CD4-positive, alpha-beta memory T cell (primary cell): ENCODE measurements at regions of chr4 and their contacts with region 1.

Region 1: GRCh38 chr4:80365928-80366327 is 30.4 kb downstream of the CFAP299 start:
- DNase-seq: peak; percentile 48 to 69 (median 63)
- H3K4me3 ChIP-seq: no peak overlapping the region
- H3K4me3 Mint-ChIP-seq: no peak overlapping the region
- H3K27ac ChIP-seq: no peak overlapping the region
- H3K27ac Mint-ChIP-seq: peak overlapping the region in 1 of 7 donors; percentile 31
- H3K4me1 ChIP-seq: peaks cover 4% of the 10 kb centered on the region
- H3K4me1 Mint-ChIP-seq: peaks cover 6 to 8% (median 7%) of the 10 kb centered on the region in 4 donors
- H3K27me3 ChIP-seq: no peaks in the 10 kb centered on the region
- H3K27me3 Mint-ChIP-seq: peaks cover 0 to 2% of the 10 kb centered on the region in 2 donors

Region 2: GRCh38 chr4:78951862-78952472 is 1414.0 kb before region 1 on chr4:
- CTCF ChIA-PET with region 1: interaction called, 3 read pairs
- POLR2A ChIA-PET with region 1: no interaction called
- intact Hi-C with region 1: loop called (anchors 10 kb)
- DNase-seq: peak in 4 of 5 donors; percentile 41 to 45 (median 41)
- H3K4me3 ChIP-seq: no peak overlapping the region
- H3K4me3 Mint-ChIP-seq: no peak overlapping the region
- H3K27ac ChIP-seq: no peak overlapping the region
- H3K27ac Mint-ChIP-seq: no peak overlapping the region
- H3K4me1 ChIP-seq: no peaks in the 10 kb centered on the region
- H3K4me1 Mint-ChIP-seq: no peaks in the 10 kb centered on the region
- H3K27me3 ChIP-seq: no peaks in the 10 kb centered on the region
- H3K27me3 Mint-ChIP-seq: peaks cover 12 to 18% of the 10 kb centered on the region in 2 donors

Region 3: GRCh38 chr4:80072218-80072743 is 293.6 kb before region 1 on chr4:
- CTCF ChIA-PET with region 1: no interaction called
- POLR2A ChIA-PET with region 1: no interaction called
- intact Hi-C with region 1: no loop called
- DNase-seq: peak; percentile 54 to 80 (median 64)
- H3K4me3 ChIP-seq: peak overlapping the region; percentile 68 to 75
- H3K4me3 Mint-ChIP-seq: peak overlapping the region; percentile 97 to 99 (median 98)
- H3K27ac ChIP-seq: peak overlapping the region; percentile 86
- H3K27ac Mint-ChIP-seq: peak overlapping the region; percentile 90 to 99 (median 98)
- H3K4me1 ChIP-seq: peaks cover 78% of the 10 kb centered on the region
- H3K4me1 Mint-ChIP-seq: peaks cover 46 to 86% (median 59%) of the 10 kb centered on the region in 4 donors
- H3K27me3 ChIP-seq: no peaks in the 10 kb centered on the region
- H3K27me3 Mint-ChIP-seq: no peaks in the 10 kb centered on the region

Region 4: GRCh38 chr4:80340036-80340435 is 25.9 kb before region 1 on chr4:
- CTCF ChIA-PET with region 1: no interaction called
- POLR2A ChIA-PET with region 1: no interaction called
- intact Hi-C with region 1: no loop called
- DNase-seq: no peak
- H3K4me3 ChIP-seq: no peak overlapping the region
- H3K4me3 Mint-ChIP-seq: no peak overlapping the region
- H3K27ac ChIP-seq: no peak overlapping the region
- H3K27ac Mint-ChIP-seq: no peak overlapping the region
- H3K4me1 ChIP-seq: peaks cover 15% of the 10 kb centered on the region
- H3K4me1 Mint-ChIP-seq: peaks cover 7 to 21% (median 11%) of the 10 kb centered on the region in 4 donors
- H3K27me3 ChIP-seq: peaks cover 19% of the 10 kb centered on the region
- H3K27me3 Mint-ChIP-seq: peaks cover 15 to 22% of the 10 kb centered on the region in 2 donors

Region 5: DNA sequence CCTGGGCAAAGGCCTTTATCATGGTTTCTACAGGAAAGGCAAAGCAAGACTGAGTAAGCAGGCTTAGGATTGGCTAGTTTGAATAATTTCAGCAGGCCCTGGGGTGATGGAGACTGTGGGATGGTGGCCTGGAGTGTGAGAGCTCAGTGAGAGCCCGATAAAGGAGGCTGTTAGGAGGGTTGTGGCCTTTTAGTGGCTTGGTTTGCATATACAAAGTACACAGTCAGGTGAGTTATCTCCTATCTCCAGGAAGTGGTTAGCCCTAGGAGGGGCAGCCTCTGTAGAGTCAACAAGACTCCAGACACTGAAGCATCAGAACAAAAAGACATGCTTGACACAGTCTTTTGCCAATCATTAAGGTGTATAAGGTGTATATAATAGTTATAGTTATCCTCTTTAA is 126.8 kb after region 1 on chr4:
- CTCF ChIA-PET with region 1: no interaction called
- POLR2A ChIA-PET with region 1: no interaction called
- intact Hi-C with region 1: loop called (anchors 5 kb)
- DNase-seq: peak; percentile 76 to 83 (median 81)
- H3K4me3 ChIP-seq: no peak overlapping the region
- H3K4me3 Mint-ChIP-seq: peak overlapping the region in 7 of 8 donors; percentile 33 to 79 (median 69)
- H3K27ac ChIP-seq: peak overlapping the region; percentile 24
- H3K27ac Mint-ChIP-seq: peak overlapping the region; percentile 82 to 95 (median 92)
- H3K4me1 ChIP-seq: peaks cover 58% of the 10 kb centered on the region
- H3K4me1 Mint-ChIP-seq: peaks cover 45 to 66% (median 56%) of the 10 kb centered on the region in 4 donors
- H3K27me3 ChIP-seq: no peaks in the 10 kb centered on the region
- H3K27me3 Mint-ChIP-seq: no peaks in the 10 kb centered on the region

Region 6: DNA sequence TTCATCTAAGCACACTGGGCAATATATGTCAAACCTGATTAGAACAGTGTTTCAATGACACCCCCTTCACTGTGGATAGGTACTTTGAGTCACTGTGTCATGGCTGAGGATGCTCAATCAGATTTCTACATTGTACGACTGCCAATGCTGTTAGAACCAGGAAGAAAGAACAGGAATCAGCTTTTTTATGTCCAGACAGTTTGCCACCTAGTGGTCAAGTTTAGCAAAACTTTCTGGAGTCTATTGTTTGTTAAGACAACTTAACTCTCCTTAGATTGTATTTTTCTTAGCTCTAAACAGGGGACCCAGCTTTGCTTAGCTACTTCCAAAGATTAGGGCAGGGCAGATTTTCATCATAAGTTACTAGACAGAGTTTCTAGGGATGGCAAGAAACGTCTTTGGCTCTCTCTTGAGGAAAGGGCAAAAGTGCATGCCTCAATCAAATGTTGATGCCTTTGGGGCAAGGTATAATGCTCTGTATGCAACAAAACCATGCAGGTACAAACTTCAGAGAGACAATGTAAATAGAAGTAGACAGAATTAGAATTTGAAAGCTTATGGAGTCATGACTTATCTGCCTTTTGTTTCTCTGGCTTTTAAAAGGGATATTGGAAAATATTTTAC is 624.1 kb after region 1 on chr4:
- CTCF ChIA-PET with region 1: interaction called, 76 read pairs
- POLR2A ChIA-PET with region 1: no interaction called
- intact Hi-C with region 1: loop called (anchors 1 kb)
- DNase-seq: peak; percentile 36 to 56 (median 48)
- H3K4me3 ChIP-seq: no peak overlapping the region
- H3K4me3 Mint-ChIP-seq: no peak overlapping the region
- H3K27ac ChIP-seq: no peak overlapping the region
- H3K27ac Mint-ChIP-seq: no peak overlapping the region
- H3K4me1 ChIP-seq: no peaks in the 10 kb centered on the region
- H3K4me1 Mint-ChIP-seq: peaks cover 0 to 4% (median 0%) of the 10 kb centered on the region in 4 donors
- H3K27me3 ChIP-seq: no peaks in the 10 kb centered on the region
- H3K27me3 Mint-ChIP-seq: peaks cover 2 to 11% of the 10 kb centered on the region in 2 donors

Region 7: GRCh38 chr4:81052119-81053068 is 686.5 kb after region 1 on chr4:
- CTCF ChIA-PET with region 1: interaction called, 150 read pairs
- POLR2A ChIA-PET with region 1: no interaction called
- intact Hi-C with region 1: loop called (anchors 1 kb)
- DNase-seq: peak in 4 of 5 donors; percentile 20 to 39 (median 23)
- H3K4me3 ChIP-seq: no peak overlapping the region
- H3K4me3 Mint-ChIP-seq: no peak overlapping the region
- H3K27ac ChIP-seq: no peak overlapping the region
- H3K27ac Mint-ChIP-seq: no peak overlapping the region
- H3K4me1 ChIP-seq: no peaks in the 10 kb centered on the region
- H3K4me1 Mint-ChIP-seq: no peaks in the 10 kb centered on the region
- H3K27me3 ChIP-seq: no peaks in the 10 kb centered on the region
- H3K27me3 Mint-ChIP-seq: peaks cover 4 to 5% of the 10 kb centered on the region in 2 donors